Endothelial cell of umbilical vein (primary cell): ENCODE measurements at regions of chr10 and their contacts with region 1.

Region 1: DNA sequence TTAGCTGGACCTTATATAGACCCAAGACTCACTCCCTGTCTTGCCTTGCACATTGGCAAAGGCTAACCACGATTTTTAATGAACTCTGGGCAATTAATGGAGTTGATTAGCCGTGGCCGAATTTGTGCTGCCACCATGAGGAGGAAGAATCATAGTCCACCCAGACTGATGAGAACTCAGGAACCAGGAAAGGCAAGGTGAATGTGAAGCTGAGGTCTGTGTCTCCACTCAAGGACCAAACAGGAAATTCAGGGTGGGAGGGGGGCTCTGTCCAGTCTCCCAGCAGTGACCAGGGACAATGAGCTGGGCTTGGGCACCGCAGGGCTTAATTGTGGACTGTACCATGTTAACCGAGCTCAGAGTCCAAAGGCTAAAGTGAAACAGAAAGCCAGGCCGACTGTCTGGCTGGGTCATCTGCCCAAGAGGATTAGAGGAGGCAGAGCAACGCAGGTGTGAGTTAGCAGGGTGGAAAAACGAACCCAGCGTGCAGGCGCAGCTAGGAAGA is 127.0 kb upstream of the JCAD start:
- DNase-seq: peak; percentile 60
- H3K4me3 ChIP-seq: no peak overlapping the region
- H3K27ac ChIP-seq: peak overlapping the region; percentile 79
- H3K4me1 ChIP-seq: peaks cover 50% of the 10 kb centered on the region
- H3K27me3 ChIP-seq: no peaks in the 10 kb centered on the region
- CTCF ChIP-seq: peak; percentile 7 to 17
- POLR2A ChIP-seq: no peak

Region 2: GRCh38 chr10:29926693-29927048 is 259.8 kb before region 1 on chr10:
- CTCF ChIA-PET with region 1: no interaction called
- POLR2A ChIA-PET with region 1: no interaction called
- dilution Hi-C with region 1: no loop called
- intact Hi-C with region 1: no loop called
- DNase-seq: no peak
- H3K4me3 ChIP-seq: no peak overlapping the region
- H3K27ac ChIP-seq: no peak overlapping the region
- H3K4me1 ChIP-seq: no peaks in the 10 kb centered on the region
- H3K27me3 ChIP-seq: no peaks in the 10 kb centered on the region
- CTCF ChIP-seq: peak; percentile 34 to 41
- POLR2A ChIP-seq: no peak

Region 3: DNA sequence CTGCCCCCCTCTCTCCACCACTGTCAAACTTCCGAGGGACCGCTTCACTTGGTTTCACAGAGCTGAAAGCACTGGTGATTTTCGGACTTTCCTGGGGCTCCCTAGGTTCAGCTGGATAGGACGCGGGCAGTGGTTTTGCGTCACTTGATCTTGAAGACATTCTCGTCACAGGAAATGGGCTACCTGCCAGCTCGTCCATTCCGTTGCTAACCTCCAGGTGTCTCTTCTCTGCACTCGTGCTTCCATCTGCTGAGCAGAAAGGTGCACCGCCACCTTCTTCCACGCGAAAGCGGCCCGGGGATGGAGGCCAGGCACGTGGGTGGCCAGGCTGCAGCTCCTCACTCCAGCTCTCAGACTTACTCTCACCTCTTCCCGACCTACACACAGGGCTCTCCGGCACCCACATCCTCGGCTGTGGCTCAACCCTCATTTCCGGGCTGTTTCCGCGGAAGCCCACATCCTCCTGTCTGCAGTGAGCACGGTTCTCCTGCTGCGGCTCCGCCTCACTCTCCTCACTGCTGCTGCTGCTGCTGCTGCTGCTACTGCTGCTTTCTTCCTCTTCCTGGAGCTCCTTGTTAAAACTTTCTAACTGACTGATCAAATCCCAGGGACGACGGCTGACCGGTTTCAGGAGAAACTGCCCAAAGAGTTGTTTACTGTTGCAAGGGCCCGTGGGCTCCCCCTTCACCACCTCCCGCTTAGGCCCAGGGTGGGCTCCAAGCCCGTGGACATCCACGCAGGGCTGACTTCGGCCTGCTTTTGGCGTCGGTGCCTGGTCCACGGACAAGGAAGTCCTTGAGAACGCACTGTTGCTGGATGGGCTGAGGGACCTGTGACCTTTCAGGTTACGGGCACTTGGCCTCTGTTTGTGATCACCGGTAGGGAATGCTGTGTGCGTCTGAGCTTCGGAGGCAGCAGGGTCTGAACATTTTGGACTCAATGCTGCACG is 159.1 kb before region 1 on chr10:
- CTCF ChIA-PET with region 1: interaction called, 28 read pairs
- POLR2A ChIA-PET with region 1: interaction called, 5 read pairs
- dilution Hi-C with region 1: no loop called
- intact Hi-C with region 1: loop called (anchors 1 kb)
- DNase-seq: peak; percentile 73
- H3K4me3 ChIP-seq: no peak overlapping the region
- H3K27ac ChIP-seq: peak overlapping the region; percentile 78
- H3K4me1 ChIP-seq: peaks cover 44% of the 10 kb centered on the region
- H3K27me3 ChIP-seq: no peaks in the 10 kb centered on the region
- CTCF ChIP-seq: peak; percentile 14
- POLR2A ChIP-seq: peak; percentile 40

Region 4: GRCh38 chr10:30041196-30042105 is 145.0 kb before region 1 on chr10:
- CTCF ChIA-PET with region 1: interaction called, 12 read pairs
- POLR2A ChIA-PET with region 1: interaction called, 4 read pairs
- dilution Hi-C with region 1: no loop called
- intact Hi-C with region 1: loop called (anchors 1 kb)
- DNase-seq: peak; percentile 96
- H3K4me3 ChIP-seq: no peak overlapping the region
- H3K27ac ChIP-seq: peak overlapping the region; percentile 81
- H3K4me1 ChIP-seq: peaks cover 50% of the 10 kb centered on the region
- H3K27me3 ChIP-seq: no peaks in the 10 kb centered on the region
- CTCF ChIP-seq: no peak
- POLR2A ChIP-seq: peak; percentile 52

Region 5: GRCh38 chr10:30059209-30060107 is 127.0 kb before region 1 on chr10 and contains the start of gene JCAD:
- CTCF ChIA-PET with region 1: interaction called, 7 read pairs
- POLR2A ChIA-PET with region 1: no interaction called
- dilution Hi-C with region 1: no loop called
- intact Hi-C with region 1: loop called (anchors 1 kb)
- DNase-seq: peak; percentile 69
- H3K4me3 ChIP-seq: peak within 1 kb of the TSS; percentile 62 to 69 (median 68)
- H3K27ac ChIP-seq: peak within 1 kb of the TSS; percentile 69
- H3K4me1 ChIP-seq: peaks cover 59% of the 10 kb centered on the region
- H3K27me3 ChIP-seq: no peaks in the 10 kb centered on the region
- CTCF ChIP-seq: no peak
- POLR2A ChIP-seq: peak; percentile 55
- total RNA-seq, gene JCAD: 76.3 and 79.7 TPM in 2 replicates

Region 6: DNA sequence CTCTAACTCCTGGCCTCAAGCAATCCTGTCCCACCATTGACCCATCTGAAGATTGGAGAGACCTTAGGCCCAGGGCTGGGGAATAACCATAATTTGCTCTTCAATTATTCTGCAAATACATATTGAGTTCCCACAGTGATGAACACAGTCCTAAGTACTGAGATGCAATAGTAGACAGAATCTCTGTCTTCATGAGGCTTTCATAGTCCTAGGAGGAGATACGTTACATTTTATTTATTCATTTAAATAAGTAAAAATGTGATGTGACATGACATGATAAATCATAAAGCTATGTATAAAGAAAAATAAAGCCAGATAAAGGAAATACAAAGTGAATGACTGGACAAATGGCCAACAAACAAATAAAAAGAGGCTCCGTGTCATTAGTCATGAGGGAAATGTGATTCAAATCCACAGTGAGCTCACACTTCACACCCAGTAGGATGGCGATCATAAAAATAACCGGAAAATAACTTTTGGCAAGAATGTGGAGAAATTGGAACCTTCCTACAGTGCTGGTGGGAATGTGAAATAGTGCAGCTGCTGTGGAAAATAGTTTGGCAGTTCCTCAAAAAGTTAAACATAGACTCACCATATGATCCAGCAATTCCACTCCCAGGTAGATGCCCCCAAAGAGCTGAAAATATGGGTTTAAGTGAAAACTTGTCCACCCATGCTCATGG is 74.9 kb before region 1 on chr10:
- CTCF ChIA-PET with region 1: interaction called, 5 read pairs
- POLR2A ChIA-PET with region 1: no interaction called
- dilution Hi-C with region 1: no loop called
- intact Hi-C with region 1: loop called (anchors 2 kb)
- DNase-seq: peak; percentile 96
- H3K4me3 ChIP-seq: no peak overlapping the region
- H3K27ac ChIP-seq: peak overlapping the region; percentile 64
- H3K4me1 ChIP-seq: peaks cover 29% of the 10 kb centered on the region
- H3K27me3 ChIP-seq: no peaks in the 10 kb centered on the region
- CTCF ChIP-seq: no peak
- POLR2A ChIP-seq: no peak

Region 7: GRCh38 chr10:30125496-30125895 is 60.9 kb before region 1 on chr10:
- CTCF ChIA-PET with region 1: no interaction called
- POLR2A ChIA-PET with region 1: no interaction called
- dilution Hi-C with region 1: no loop called
- intact Hi-C with region 1: loop called (anchors 2 kb)
- DNase-seq: no peak
- H3K4me3 ChIP-seq: no peak overlapping the region
- H3K27ac ChIP-seq: no peak overlapping the region
- H3K4me1 ChIP-seq: peaks cover 14% of the 10 kb centered on the region
- H3K27me3 ChIP-seq: no peaks in the 10 kb centered on the region
- CTCF ChIP-seq: no peak
- POLR2A ChIP-seq: no peak

Region 8: DNA sequence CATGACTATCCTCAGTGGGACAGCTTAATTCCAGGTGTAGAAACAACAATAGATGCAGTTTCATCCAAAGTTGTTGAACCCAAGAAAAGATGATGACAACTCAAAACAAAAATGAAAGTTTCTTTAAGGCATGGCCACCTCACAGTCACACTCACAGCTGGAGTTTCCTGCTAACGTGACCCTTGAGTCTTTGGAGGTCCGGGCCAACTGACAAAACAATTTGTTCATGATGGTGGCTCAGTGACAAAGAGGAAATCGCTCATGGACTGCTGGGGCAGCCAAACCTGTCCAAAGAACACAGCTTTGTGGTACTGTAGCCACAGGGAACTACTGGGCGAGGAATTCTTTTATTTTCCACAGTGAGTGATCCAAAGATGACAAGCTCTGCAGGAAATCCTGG is 31.0 kb before region 1 on chr10:
- CTCF ChIA-PET with region 1: interaction called, 5 read pairs
- POLR2A ChIA-PET with region 1: no interaction called
- dilution Hi-C with region 1: no loop called
- intact Hi-C with region 1: loop called (anchors 1 kb)
- DNase-seq: peak; percentile 77
- H3K4me3 ChIP-seq: no peak overlapping the region
- H3K27ac ChIP-seq: peak overlapping the region; percentile 60
- H3K4me1 ChIP-seq: peaks cover 16% of the 10 kb centered on the region
- H3K27me3 ChIP-seq: no peaks in the 10 kb centered on the region
- CTCF ChIP-seq: no peak
- POLR2A ChIP-seq: no peak